ENCODE measurements at regions of chr4 and their contacts with region 1.

Region 1: GRCh38 chr4:103091601-103092223 is 7.9 kb downstream of the BDH2 start:
- DNase-seq: peak; percentile 65
- H3K4me3 Mint-ChIP-seq: no peak overlapping the region
- H3K27ac Mint-ChIP-seq: peak overlapping the region; percentile 81
- H3K4me1 Mint-ChIP-seq: peaks cover 23% of the 10 kb centered on the region
- H3K27me3 Mint-ChIP-seq: no peaks in the 10 kb centered on the region

Region 2: DNA sequence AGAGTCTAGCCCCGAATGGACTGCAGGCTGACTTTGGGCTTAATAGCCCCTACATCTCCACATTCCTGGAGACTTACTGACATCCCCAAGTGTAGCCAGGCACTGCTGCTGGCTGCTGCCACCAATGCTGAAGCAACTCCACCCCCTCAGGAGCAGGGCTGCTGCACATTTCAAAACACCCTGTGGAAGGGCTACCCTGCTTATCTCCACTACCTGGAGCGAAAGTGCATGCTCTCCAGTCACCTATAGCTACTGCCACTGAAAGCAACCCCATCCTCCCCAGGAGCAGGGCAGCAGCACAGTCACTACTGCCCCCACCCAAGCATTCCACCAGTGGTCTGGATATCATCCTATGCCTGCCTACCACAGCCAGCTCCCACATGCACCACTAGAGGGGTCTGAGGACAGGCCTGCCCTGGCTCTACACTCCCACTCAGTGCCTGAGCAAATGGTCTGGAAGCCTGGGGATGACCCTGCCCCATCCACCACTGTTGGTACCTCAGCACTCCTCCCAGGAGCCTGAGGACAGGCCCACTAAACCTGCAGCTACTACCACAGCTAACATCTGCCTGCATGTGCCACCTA is 386.3 kb before region 1 on chr4:
- CTCF ChIA-PET with region 1: no interaction called
- DNase-seq: no peak
- H3K4me3 Mint-ChIP-seq: no peak overlapping the region
- H3K27ac Mint-ChIP-seq: no peak overlapping the region
- H3K4me1 Mint-ChIP-seq: no peaks in the 10 kb centered on the region
- H3K27me3 Mint-ChIP-seq: peaks cover 5% of the 10 kb centered on the region

Region 3: DNA sequence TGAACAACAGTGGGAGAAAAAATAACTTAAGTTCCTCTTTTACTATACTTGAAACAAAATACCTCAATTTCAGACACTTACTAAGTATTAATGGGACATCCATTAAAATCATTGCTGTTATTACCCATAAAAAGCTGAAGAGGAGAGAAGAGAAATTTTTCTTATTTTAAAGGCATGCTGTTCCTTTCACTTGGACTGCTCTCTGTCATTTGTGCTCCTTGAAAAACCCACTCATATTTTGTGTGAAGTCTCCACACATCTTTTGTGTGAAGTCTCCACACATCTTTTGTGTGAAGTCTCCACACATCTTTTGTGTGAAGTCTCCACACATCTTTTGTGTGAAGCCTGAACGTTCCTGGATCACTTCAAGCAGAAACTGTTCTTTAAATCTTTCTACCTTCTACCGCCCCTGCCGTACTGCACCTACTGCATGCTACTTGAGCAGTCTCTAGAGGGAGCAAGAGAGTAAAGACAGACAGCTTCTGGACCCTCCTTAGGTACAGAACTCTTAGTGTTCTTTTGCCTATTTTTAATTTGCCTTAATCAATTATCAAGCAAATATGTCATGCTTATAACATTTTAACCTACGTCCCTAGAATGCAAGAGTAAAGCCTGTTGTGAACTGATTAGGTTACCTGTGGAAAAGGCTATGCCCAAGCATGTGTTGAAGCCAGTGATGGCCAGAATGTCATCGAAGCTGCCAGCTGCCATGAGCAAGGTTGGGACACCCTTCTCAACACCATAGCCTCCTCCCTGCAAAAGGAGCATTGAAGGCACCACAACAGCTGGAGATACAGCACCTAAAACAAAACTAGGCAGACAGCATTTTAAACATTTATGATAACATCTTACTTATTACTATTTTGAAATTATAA is 45.1 kb before region 1 on chr4:
- CTCF ChIA-PET with region 1: interaction called, 62 read pairs
- DNase-seq: peak; percentile 50
- H3K4me3 Mint-ChIP-seq: no peak overlapping the region
- H3K27ac Mint-ChIP-seq: no peak overlapping the region
- H3K4me1 Mint-ChIP-seq: peaks cover 7% of the 10 kb centered on the region
- H3K27me3 Mint-ChIP-seq: no peaks in the 10 kb centered on the region

Region 4: DNA sequence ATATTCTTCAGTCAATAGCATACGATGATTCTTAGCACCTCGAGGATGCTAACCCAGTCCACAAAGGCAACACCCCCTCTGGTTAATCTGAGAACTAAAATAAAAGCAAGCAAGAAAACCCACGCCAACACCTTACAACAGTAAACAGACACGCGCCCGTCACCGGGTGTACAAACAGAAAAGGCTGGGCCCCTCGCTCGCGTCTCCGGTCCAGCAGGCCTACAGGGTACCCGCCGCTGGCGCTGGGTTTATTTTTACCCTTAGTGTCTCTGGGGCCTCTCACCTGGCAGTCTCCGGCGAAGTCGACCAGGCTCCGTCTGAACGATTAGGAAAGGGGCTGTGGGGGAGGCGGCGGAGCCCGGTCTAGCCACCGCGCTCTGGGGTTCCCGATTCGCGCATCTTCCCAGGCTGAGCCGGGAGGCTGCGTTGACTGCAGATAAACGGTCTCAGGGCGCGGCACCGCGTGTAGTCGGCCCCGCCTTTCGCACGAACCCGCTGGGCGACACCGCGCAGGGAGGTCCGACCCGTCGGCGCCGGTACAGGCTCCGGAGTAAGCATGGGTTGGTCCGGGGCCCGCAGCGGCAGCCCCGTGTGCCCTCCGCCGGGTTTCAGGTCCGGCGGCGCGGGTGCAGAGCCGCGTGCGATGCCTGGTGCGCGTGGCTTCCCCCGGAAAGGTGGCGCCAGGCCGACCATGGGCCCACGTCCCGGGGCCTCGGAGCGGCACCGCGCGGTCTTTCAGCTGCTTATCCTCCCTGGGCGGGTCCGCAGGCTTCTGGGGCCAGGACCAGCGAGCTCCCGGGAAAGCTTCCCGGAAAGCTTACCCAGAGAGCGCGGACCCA is 15.6 kb before region 1 on chr4:
- CTCF ChIA-PET with region 1: interaction called, 10 read pairs
- DNase-seq: peak; percentile 73
- H3K4me3 Mint-ChIP-seq: peak overlapping the region; percentile 98
- H3K27ac Mint-ChIP-seq: peak overlapping the region; percentile 99
- H3K4me1 Mint-ChIP-seq: peaks cover 52% of the 10 kb centered on the region
- H3K27me3 Mint-ChIP-seq: no peaks in the 10 kb centered on the region

Region 5: DNA sequence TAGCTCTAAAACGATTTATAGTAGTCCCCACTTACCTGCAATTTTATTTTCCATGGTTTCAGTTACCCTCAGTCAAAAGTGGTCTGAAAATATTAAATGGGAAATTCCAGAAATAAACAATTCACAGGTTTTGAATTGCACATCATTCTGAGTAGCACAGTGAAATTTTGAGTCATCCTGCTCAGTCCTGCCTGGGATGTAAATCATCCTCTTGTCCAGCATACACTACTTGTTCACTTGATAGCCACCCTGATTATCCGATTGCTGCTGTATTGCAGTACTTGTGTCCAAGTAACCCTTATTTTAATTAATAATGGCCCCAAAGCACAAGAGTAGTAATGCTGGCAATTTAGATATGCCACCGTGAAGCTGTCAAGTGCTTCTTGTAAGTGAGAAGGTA is 31.4 kb after region 1 on chr4:
- CTCF ChIA-PET with region 1: no interaction called
- DNase-seq: no peak
- H3K4me3 Mint-ChIP-seq: no peak overlapping the region
- H3K27ac Mint-ChIP-seq: no peak overlapping the region
- H3K4me1 Mint-ChIP-seq: no peaks in the 10 kb centered on the region
- H3K27me3 Mint-ChIP-seq: no peaks in the 10 kb centered on the region

Region 6: GRCh38 chr4:103289186-103289585 is 197.5 kb after region 1 on chr4:
- CTCF ChIA-PET with region 1: no interaction called
- DNase-seq: no peak
- H3K4me3 Mint-ChIP-seq: no peak overlapping the region
- H3K27ac Mint-ChIP-seq: no peak overlapping the region
- H3K4me1 Mint-ChIP-seq: no peaks in the 10 kb centered on the region
- H3K27me3 Mint-ChIP-seq: no peaks in the 10 kb centered on the region